ENCODE measurements at regions of chr10 and their contacts with region 1.

Region 1: GRCh38 chr10:102450194-102450938 is 977 bp downstream of the C10orf95 start:
- H3K4me3 ChIP-seq: peak overlapping the region; percentile 73
- H3K27ac ChIP-seq: peak overlapping the region; percentile 97
- H3K4me1 ChIP-seq: peaks cover 5% of the 10 kb centered on the region
- CTCF ChIP-seq: peak; percentile 51; the same call in 1 of the 2 replicates

Region 2: DNA sequence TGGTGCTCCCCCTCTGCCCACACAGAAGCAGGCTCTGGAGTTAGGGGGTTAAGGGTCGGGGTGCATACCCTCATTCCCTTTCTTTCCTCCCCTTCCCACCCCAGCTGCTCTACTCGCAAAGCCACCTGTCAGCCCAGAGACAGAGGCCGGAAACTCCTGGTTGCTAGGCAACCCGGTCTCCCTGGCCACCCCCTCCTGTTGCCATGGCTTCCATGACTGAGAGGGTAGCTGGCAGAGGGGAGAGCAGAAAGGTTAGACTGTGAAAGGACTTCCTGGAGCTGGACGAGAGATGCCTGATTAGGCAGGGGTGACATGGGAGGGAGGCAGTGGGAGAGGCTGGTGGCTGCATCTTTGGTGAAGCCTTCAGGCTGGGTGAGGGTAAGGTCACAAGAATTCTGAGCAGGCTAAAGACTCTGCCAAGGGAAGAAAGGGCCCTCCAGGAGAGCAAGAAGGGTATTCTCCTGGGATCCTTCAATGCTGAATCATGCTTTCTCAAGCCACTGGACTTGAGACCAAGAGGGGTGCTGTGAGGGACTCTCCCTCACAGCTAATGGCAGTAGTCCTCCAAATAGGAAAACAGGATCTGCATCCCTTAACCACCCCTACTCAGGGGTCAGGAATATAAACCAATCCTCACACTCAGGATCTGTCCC is 37.2 kb before region 1 on chr10:
- CTCF ChIA-PET with region 1: no interaction called
- POLR2A ChIA-PET with region 1: no interaction called
- H3K4me3 ChIP-seq: no peak overlapping the region
- H3K27ac ChIP-seq: no peak overlapping the region
- H3K4me1 ChIP-seq: no peaks in the 10 kb centered on the region; the same call in 1 of the 2 replicates
- CTCF ChIP-seq: no peak

Region 3: GRCh38 chr10:102461187-102462054 is 11.1 kb after region 1 on chr10:
- CTCF ChIA-PET with region 1: interaction called, 5 read pairs
- POLR2A ChIA-PET with region 1: interaction called, 39 read pairs
- H3K4me3 ChIP-seq: peak overlapping the region; percentile 21
- H3K27ac ChIP-seq: no peak overlapping the region; the same call in 1 of the 2 replicates
- H3K4me1 ChIP-seq: 0 out of 2 replicates have a peak, but pooled peaks cover 2% of the 10 kb centered on the region
- CTCF ChIP-seq: no peak

Measured in HEK293 (cell line).